WTC11 (cell line): ENCODE measurements at regions of chr19 and their contacts with region 1.

Region 1: DNA sequence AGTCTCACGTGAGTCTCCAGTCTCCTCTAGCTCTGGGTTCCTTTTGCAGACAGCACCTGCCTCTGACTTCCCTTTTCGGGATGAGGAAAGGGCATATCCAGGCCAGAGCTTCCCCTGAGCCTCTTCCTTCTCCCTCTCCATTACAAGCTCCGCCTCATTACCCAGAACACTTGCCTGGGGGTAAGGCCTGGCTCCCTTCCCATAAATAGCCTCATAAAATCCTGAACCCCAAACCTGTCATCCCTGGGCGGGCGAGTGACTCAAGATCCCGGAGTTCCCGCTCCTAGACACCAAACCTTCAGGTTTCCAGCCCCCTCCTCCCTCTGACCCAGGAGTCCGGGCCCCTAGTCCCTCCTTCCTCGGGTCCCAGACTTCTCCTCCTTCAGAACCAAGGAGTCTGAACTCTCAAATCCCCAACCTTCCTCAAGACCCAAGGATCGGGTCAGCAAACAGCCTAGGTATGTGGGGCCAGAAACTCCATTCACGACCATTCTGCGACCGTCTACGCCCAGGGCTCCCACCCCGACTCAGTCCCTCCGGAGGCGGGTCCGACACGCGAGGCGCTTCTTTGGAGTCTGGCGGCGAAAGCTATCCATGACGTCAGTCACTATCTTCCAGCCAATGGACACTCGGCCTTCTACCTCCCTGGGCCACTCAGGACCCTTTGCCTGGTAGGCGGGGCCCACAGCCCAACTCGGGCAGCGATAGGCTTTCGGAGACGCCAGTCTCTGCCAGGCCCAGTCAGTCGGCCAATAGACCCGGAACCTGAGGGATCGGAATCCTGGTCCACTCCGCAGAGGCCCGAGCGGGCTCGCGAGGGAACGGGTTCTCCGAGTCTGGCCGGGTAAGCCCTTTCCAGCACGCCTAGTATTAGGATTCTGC is 6.5 kb upstream of the CNFN start:
- DNase-seq: peak; percentile 100
- ATAC-seq: peak; percentile 94
- H3K4me3 Mint-ChIP-seq: peak overlapping the region; percentile 78
- H3K27ac Mint-ChIP-seq: peak overlapping the region; percentile 86
- H3K4me1 Mint-ChIP-seq: peaks cover 30% of the 10 kb centered on the region
- H3K27me3 Mint-ChIP-seq: peaks cover 30% of the 10 kb centered on the region
- CTCF ChIP-seq: no peak

Region 2: DNA sequence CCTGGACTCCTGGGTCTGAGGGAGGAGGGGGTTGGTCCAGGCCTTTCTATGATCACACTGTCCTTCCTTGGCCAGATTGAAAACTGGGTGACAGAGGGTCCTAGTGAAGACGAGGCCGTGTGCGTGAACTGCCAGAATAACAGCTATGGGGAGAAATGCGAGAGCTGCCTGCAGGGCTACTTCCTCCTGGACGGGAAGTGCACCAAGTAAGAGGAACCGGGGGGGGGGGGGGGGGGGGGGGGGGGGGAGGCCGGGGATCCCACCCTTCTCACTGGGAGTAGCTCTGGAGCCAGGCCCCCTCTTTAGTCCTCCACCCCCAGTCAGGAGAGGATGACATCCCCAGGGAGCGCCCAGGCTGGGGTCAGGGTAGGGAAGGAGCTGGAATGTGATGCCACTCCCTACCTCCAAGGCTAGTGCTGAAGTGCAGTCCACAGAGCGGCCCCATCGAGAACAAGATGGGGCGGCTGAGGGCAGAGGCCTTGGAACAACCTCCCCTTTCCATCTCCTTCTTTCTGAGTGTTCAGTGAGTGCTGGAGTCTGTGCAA is 25.9 kb before region 1 on chr19:
- CTCF ChIA-PET with region 1: interaction called, 21 read pairs
- POLR2A ChIA-PET with region 1: interaction called, 8 read pairs
- DNase-seq: no peak
- ATAC-seq: peak; percentile 14
- H3K4me3 Mint-ChIP-seq: peak overlapping the region; percentile 43; the same call in 1 of the 2 replicates
- H3K27ac Mint-ChIP-seq: peak overlapping the region; percentile 84
- H3K4me1 Mint-ChIP-seq: peaks cover 51% of the 10 kb centered on the region
- H3K27me3 Mint-ChIP-seq: no peaks in the 10 kb centered on the region
- CTCF ChIP-seq: no peak

Region 3: DNA sequence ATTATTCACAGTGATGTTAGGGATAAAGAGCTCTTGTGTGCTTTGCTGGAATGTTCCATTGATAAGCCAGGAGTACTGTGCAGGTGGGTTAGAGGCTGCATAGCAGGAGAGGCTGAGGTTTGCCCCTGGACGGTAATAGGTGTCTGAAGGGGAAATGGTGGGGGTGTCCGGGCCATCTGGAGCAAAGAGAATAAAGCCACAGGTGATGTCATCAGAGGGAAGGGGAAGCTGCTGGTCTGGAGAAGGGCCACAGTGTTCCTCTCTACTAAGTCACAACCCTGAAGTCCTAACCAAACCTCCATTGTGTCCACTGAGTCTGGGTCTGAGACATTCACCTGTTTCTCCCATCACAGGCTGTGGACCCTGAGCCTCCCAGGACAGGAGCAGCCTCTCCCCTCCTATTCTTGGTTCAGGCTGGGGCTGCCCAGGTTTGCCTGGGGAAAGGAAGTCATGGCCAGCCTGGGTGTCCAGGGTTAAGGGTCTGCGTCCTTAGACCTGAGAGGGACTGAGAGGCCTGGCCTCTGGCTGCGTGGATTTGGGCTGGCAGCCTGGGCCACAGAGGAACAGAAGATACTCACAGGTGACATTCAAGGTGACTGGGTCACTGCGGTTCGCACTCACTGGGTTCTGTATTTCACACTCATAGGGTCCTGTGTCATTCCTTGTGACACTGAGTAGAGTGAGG is 124.9 kb after region 1 on chr19:
- CTCF ChIA-PET with region 1: no interaction called
- POLR2A ChIA-PET with region 1: no interaction called
- DNase-seq: no peak
- ATAC-seq: no peak
- H3K4me3 Mint-ChIP-seq: no peak overlapping the region
- H3K27ac Mint-ChIP-seq: peak overlapping the region; percentile 7; the same call in 1 of the 2 replicates
- H3K4me1 Mint-ChIP-seq: peaks cover 5% of the 10 kb centered on the region
- H3K27me3 Mint-ChIP-seq: no peaks in the 10 kb centered on the region
- CTCF ChIP-seq: no peak